ENCODE measurements at regions of chr1 and their contacts with region 1.

Region 1: DNA sequence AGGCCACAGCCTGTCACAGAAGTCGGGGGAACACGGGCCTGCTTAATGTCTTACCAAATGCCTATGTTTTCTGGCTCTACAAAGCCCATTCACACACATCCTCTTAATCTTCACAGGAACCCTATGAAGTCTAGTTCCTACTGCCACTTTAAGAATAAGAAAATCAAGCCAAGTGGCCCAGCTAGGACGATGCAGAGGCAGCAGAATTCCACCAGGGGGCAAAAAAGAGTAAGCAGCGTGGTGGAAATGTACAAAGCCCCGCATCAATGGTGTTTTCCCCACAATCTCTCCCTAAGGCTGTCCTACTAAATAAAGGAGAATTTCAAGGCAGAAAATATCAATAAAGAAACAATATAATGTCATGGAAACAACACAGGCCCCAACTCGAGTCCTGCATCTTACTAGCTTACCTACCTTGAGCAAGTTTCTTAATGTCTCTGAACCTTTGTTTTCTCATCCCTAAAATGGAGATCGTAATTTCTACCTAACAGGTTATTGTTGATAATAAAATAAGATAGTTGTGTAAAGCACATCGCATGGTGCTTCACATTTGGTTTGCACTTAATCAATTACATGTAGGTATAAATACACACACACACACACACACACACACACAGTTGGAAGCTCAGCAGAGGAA is 21.4 kb downstream of the SEC16B start:
- DNase-seq: no peak
- ATAC-seq: peak; percentile 76 to 90 (median 82)
- H3K4me3 ChIP-seq: no peak overlapping the region
- H3K27ac ChIP-seq: no peak overlapping the region
- H3K4me1 ChIP-seq: no peaks in the 10 kb centered on the region
- H3K27me3 ChIP-seq: no peaks in the 10 kb centered on the region
- CTCF ChIP-seq: peak; percentile 67 to 82 (median 80)
- POLR2A ChIP-seq: no peak

Region 2: DNA sequence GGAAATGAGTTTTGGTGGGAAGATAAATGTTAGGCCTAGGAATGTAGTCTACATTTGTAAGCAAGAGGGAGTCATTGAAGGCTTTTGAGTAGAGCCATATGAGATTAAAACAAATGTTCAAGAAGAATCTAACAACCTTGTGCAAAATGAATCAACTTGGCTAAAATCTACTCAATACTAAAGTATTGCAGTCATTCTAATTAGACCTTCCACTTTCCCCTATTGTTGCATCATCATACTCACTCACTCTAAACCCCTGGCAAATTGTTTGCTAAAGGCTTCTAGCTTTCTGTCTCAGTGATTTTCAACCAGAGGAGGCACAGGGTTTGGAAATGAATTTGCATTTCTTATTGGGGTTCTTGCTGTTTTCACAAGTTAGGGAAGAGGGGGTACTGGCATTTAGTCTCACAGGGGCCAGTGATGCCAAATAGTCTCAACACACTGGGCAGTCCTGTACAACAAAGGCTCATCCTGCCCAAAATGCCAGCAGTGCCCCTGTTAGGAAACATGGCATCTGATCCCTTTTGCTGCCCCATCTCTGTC is 63.9 kb before region 1 on chr1:
- intact Hi-C with region 1: no loop called
- DNase-seq: no peak
- ATAC-seq: no peak
- H3K4me3 ChIP-seq: no peak overlapping the region
- H3K27ac ChIP-seq: no peak overlapping the region
- H3K4me1 ChIP-seq: no peaks in the 10 kb centered on the region
- H3K27me3 ChIP-seq: peaks cover 0 to 3% of the 10 kb centered on the region in 2 donors
- CTCF ChIP-seq: no peak
- POLR2A ChIP-seq: no peak

Region 3: GRCh38 chr1:178031856-178032320 is 83.4 kb after region 1 on chr1:
- intact Hi-C with region 1: loop called in 1 of 2 experiments (anchors 10 kb)
- DNase-seq: peak; percentile 86 to 97 (median 88)
- ATAC-seq: peak; percentile 89 to 97 (median 89)
- H3K4me3 ChIP-seq: no peak overlapping the region
- H3K27ac ChIP-seq: peak overlapping the region in 2 of 3 donors; percentile 4 to 19
- H3K4me1 ChIP-seq: peaks cover 0 to 66% (median 17%) of the 10 kb centered on the region in 4 donors
- H3K27me3 ChIP-seq: no peaks in the 10 kb centered on the region
- CTCF ChIP-seq: peak; percentile 87 to 96 (median 94)
- POLR2A ChIP-seq: no peak

Measured in right lobe of liver (tissue), 6 donors.